ENCODE measurements at regions of chr2 and their contacts with region 1.

Region 1: DNA sequence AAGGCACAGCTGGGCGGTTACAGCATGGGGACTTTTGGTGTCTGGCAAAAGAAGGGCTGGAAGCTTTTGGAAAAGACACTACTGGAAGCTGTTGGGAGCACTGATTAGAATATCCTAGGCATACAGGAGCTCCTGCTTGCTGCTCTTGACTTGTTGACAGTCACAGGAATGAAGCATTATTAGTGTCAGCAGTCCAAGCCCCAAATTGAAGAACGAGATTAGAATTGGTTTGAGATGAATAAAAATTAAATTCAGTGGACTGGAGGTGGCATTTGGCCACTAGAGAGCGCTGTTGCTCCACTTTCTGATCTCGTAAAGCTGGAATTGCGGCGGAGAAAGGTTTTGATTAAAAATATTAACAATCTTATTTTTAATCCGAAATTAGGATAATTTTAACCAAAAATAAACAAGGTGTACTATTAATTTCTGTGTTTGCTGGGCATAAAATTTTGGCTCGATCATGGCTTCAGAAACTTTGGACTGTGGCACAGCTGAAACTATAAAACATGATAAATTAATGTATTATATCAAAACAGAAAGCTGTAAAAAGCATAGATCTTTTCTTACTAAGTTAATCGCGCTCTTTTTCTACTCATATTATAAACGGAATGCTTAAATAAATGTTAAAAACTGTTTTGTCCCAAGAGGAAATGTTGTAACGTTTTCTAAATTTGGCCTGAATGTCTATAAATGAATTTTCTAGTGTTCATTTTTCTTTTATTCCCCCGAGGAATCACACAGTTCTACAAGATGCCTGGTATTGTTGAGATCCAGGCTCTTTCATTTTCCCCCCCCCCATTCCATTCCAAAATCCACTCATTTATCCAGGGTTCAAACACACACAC is 2.4 kb upstream of the HOXD8 start:
- DNase-seq: peak; percentile 36 to 81 (median 74)
- ATAC-seq: no peak
- H3K4me3 ChIP-seq: no peak overlapping the region
- H3K4me3 Mint-ChIP-seq: no peak overlapping the region
- H3K27ac ChIP-seq: no peak overlapping the region
- H3K27ac Mint-ChIP-seq: no peak overlapping the region
- H3K4me1 ChIP-seq: peaks cover 36% of the 10 kb centered on the region
- H3K4me1 Mint-ChIP-seq: peaks cover 31% of the 10 kb centered on the region
- H3K27me3 ChIP-seq: peaks cover 68 to 72% of the 10 kb centered on the region in 2 experiments
- H3K27me3 Mint-ChIP-seq: peaks cover 71% of the 10 kb centered on the region
- CTCF ChIP-seq: peak; percentile 99

Region 2: GRCh38 chr2:176039375-176039774 is 87.8 kb before region 1 on chr2:
- CTCF ChIA-PET with region 1: no interaction called
- POLR2A ChIA-PET with region 1: no interaction called
- intact Hi-C with region 1: no loop called
- DNase-seq: no peak
- ATAC-seq: no peak
- H3K4me3 ChIP-seq: no peak overlapping the region
- H3K4me3 Mint-ChIP-seq: no peak overlapping the region
- H3K27ac ChIP-seq: no peak overlapping the region
- H3K27ac Mint-ChIP-seq: no peak overlapping the region
- H3K4me1 ChIP-seq: no peaks in the 10 kb centered on the region
- H3K4me1 Mint-ChIP-seq: no peaks in the 10 kb centered on the region
- H3K27me3 ChIP-seq: peaks cover 0 to 2% of the 10 kb centered on the region in 2 experiments
- H3K27me3 Mint-ChIP-seq: peaks cover 29% of the 10 kb centered on the region
- CTCF ChIP-seq: no peak

Region 3: DNA sequence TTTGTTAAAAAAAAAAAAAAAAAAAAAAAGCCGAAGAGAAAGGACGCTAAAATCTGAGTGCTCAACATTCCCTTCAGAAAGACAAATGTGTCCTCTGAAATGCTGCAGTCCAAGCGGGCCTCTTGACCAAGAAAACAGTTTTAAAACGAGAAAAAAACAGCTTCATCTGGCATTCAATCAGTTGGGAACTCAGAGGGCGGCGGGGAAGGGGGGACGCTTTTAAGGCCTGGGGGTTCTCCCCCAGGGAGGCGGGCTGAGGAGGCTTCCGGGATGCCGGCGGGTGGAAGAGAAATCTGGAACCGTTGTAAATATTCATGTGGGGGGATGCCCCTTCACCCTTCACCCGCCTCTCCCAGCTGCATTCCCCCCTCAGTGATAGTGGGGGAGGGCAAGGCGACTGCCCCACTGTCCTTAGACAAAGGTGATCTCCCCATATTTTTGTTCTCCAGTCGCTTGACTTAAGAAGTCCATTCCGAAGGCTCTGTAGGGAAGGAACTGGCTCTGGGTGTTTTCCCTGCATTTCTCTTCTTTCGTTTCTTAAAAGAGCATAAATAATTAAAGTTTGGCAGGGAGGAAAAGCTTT is 23.3 kb before region 1 on chr2:
- CTCF ChIA-PET with region 1: interaction called, 20 read pairs
- POLR2A ChIA-PET with region 1: no interaction called
- intact Hi-C with region 1: no loop called
- DNase-seq: no peak
- ATAC-seq: no peak
- H3K4me3 ChIP-seq: no peak overlapping the region
- H3K4me3 Mint-ChIP-seq: no peak overlapping the region
- H3K27ac ChIP-seq: no peak overlapping the region
- H3K27ac Mint-ChIP-seq: no peak overlapping the region
- H3K4me1 ChIP-seq: peaks cover 24% of the 10 kb centered on the region
- H3K4me1 Mint-ChIP-seq: peaks cover 27% of the 10 kb centered on the region
- H3K27me3 ChIP-seq: peaks cover 64 to 75% of the 10 kb centered on the region in 2 experiments
- H3K27me3 Mint-ChIP-seq: peaks cover 78% of the 10 kb centered on the region
- CTCF ChIP-seq: no peak

Region 4: GRCh38 chr2:176454893-176455811 is 328.0 kb after region 1 on chr2:
- CTCF ChIA-PET with region 1: interaction called, 125 read pairs
- POLR2A ChIA-PET with region 1: interaction called, 4 read pairs
- intact Hi-C with region 1: loop called (anchors 1 kb)
- DNase-seq: peak; percentile 57 to 88 (median 75)
- ATAC-seq: peak; percentile 76
- H3K4me3 ChIP-seq: no peak overlapping the region
- H3K4me3 Mint-ChIP-seq: no peak overlapping the region
- H3K27ac ChIP-seq: no peak overlapping the region
- H3K27ac Mint-ChIP-seq: no peak overlapping the region
- H3K4me1 ChIP-seq: no peaks in the 10 kb centered on the region
- H3K4me1 Mint-ChIP-seq: peaks cover 2% of the 10 kb centered on the region
- H3K27me3 ChIP-seq: peaks cover 0 to 3% of the 10 kb centered on the region in 2 experiments
- H3K27me3 Mint-ChIP-seq: peaks cover 42% of the 10 kb centered on the region
- CTCF ChIP-seq: peak; percentile 97

Region 5: GRCh38 chr2:176466918-176467452 is 339.8 kb after region 1 on chr2:
- CTCF ChIA-PET with region 1: no interaction called
- POLR2A ChIA-PET with region 1: no interaction called
- intact Hi-C with region 1: no loop called
- DNase-seq: no peak
- ATAC-seq: no peak
- H3K4me3 ChIP-seq: no peak overlapping the region
- H3K4me3 Mint-ChIP-seq: no peak overlapping the region
- H3K27ac ChIP-seq: no peak overlapping the region
- H3K27ac Mint-ChIP-seq: no peak overlapping the region
- H3K4me1 ChIP-seq: no peaks in the 10 kb centered on the region
- H3K4me1 Mint-ChIP-seq: peaks cover 2% of the 10 kb centered on the region
- H3K27me3 ChIP-seq: no peaks in the 10 kb centered on the region
- H3K27me3 Mint-ChIP-seq: peaks cover 27% of the 10 kb centered on the region
- CTCF ChIP-seq: no peak

Region 6: DNA sequence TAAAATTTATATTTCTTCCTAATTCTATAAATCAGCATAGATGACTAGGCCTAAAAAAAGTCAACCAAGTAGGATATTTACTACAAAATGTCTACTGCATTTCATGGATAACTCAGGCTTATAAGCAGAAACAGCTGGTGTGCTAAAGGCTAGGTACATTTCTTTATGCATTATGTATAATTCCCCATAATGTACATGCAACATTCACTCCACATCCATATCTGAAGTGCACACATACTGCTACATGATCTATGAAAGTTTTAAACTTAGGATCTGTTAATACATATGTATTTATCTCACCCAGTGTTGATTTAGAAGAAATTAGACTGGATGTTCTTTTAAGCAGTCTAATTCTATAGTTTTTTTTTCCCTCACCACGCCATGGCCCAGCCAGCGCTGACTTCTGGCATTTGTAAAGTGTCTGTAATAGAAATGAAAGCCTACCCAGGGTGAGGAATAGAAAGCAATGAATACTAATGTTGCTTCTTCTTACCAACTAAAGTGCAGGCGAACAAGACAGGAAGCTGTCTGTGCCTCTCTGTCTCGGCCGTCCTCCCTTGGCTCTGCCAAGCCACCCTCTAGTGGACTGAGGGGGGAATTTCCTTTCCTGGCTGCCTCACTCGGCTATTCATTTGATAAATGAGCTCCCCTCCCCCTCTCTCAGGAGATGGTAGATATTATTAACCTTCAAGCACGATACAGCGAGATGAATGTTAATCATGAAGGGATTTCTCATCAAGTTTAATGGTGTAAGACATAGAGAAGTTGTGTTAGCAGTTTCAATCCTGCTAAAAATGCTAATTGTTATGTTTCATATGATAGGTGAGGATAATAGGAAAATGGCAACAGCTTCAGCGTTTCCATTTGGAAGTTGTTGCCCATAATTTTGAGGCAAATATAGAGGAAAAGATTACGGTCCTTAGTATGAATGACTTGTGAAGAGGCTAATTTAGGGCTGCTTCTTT is 526.6 kb after region 1 on chr2:
- CTCF ChIA-PET with region 1: interaction called, 44 read pairs
- POLR2A ChIA-PET with region 1: interaction called, 3 read pairs
- intact Hi-C with region 1: loop called (anchors 1 to 2 kb)
- DNase-seq: peak in 5 of 9 experiments; percentile 22 to 55 (median 32)
- ATAC-seq: no peak
- H3K4me3 ChIP-seq: no peak overlapping the region
- H3K4me3 Mint-ChIP-seq: no peak overlapping the region
- H3K27ac ChIP-seq: no peak overlapping the region
- H3K27ac Mint-ChIP-seq: no peak overlapping the region
- H3K4me1 ChIP-seq: peaks cover 12% of the 10 kb centered on the region
- H3K4me1 Mint-ChIP-seq: peaks cover 14% of the 10 kb centered on the region
- H3K27me3 ChIP-seq: peaks cover 0 to 4% of the 10 kb centered on the region in 2 experiments
- H3K27me3 Mint-ChIP-seq: peaks cover 36% of the 10 kb centered on the region
- CTCF ChIP-seq: peak; percentile 42

Region 7: GRCh38 chr2:177332041-177332991 is 1205.2 kb after region 1 on chr2:
- CTCF ChIA-PET with region 1: no interaction called
- POLR2A ChIA-PET with region 1: no interaction called
- intact Hi-C with region 1: loop called (anchors 5 to 10 kb)
- DNase-seq: peak in 8 of 9 experiments; percentile 6 to 79 (median 33)
- ATAC-seq: peak; percentile 87
- H3K4me3 ChIP-seq: no peak overlapping the region
- H3K4me3 Mint-ChIP-seq: no peak overlapping the region
- H3K27ac ChIP-seq: no peak overlapping the region
- H3K27ac Mint-ChIP-seq: no peak overlapping the region
- H3K4me1 ChIP-seq: peaks cover 6% of the 10 kb centered on the region
- H3K4me1 Mint-ChIP-seq: peaks cover 10% of the 10 kb centered on the region
- H3K27me3 ChIP-seq: no peaks in the 10 kb centered on the region
- H3K27me3 Mint-ChIP-seq: no peaks in the 10 kb centered on the region
- CTCF ChIP-seq: peak; percentile 73

Region 8: DNA sequence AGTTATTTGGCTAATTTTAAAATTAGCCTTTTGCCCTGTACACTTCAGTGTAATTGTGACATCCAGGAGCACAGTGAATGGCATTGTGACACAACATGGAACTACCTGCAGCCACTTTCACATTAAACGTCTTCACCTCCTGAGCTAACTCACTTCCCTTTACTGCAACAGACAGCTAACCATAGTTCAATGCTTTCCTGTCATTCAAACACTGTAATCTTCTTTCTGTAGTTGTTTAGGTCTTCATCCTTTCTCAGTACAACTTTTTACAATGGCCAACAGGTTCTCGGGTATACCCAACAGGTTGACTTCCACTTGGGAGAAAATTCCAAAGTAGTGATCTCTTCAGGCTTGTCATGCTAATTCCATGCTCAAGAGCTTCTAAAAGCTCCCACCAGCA is 1256.8 kb after region 1 on chr2:
- CTCF ChIA-PET with region 1: no interaction called
- POLR2A ChIA-PET with region 1: no interaction called
- intact Hi-C with region 1: no loop called
- DNase-seq: no peak
- ATAC-seq: no peak
- H3K4me3 ChIP-seq: no peak overlapping the region
- H3K4me3 Mint-ChIP-seq: no peak overlapping the region
- H3K27ac ChIP-seq: no peak overlapping the region
- H3K27ac Mint-ChIP-seq: no peak overlapping the region
- H3K4me1 ChIP-seq: no peaks in the 10 kb centered on the region
- H3K4me1 Mint-ChIP-seq: peaks cover 8% of the 10 kb centered on the region
- H3K27me3 ChIP-seq: no peaks in the 10 kb centered on the region
- H3K27me3 Mint-ChIP-seq: no peaks in the 10 kb centered on the region
- CTCF ChIP-seq: no peak

Region 9: GRCh38 chr2:177763532-177764265 is 1636.5 kb after region 1 on chr2:
- CTCF ChIA-PET with region 1: no interaction called
- POLR2A ChIA-PET with region 1: no interaction called
- intact Hi-C with region 1: loop called in 1 of 2 experiments (anchors 10 kb)
- DNase-seq: peak; percentile 57 to 83 (median 77)
- ATAC-seq: peak; percentile 97
- H3K4me3 ChIP-seq: no peak overlapping the region
- H3K4me3 Mint-ChIP-seq: no peak overlapping the region
- H3K27ac ChIP-seq: no peak overlapping the region
- H3K27ac Mint-ChIP-seq: no peak overlapping the region
- H3K4me1 ChIP-seq: peaks cover 5% of the 10 kb centered on the region
- H3K4me1 Mint-ChIP-seq: peaks cover 6% of the 10 kb centered on the region
- H3K27me3 ChIP-seq: no peaks in the 10 kb centered on the region
- H3K27me3 Mint-ChIP-seq: peaks cover 12% of the 10 kb centered on the region
- CTCF ChIP-seq: peak; percentile 82